ENCODE measurements at regions of chr4 and their contacts with region 1.

Region 1: GRCh38 chr4:1746265-1746691 is 25.0 kb downstream of the TACC3 start:
- DNase-seq: no peak
- H3K4me3 ChIP-seq: no peak overlapping the region
- H3K27ac ChIP-seq: no peak overlapping the region
- H3K4me1 ChIP-seq: peaks cover 14% of the 10 kb centered on the region
- H3K27me3 ChIP-seq: no peaks in the 10 kb centered on the region
- CTCF ChIP-seq: peak in 2 of 3 experiments; percentile 48 to 60
- POLR2A ChIP-seq: no peak

Region 2: GRCh38 chr4:1809754-1810511 is 63.7 kb after region 1 on chr4:
- intact Hi-C with region 1: loop called (anchors 5 kb)
- DNase-seq: no peak
- H3K4me3 ChIP-seq: no peak overlapping the region
- H3K27ac ChIP-seq: no peak overlapping the region
- H3K4me1 ChIP-seq: peaks cover 7% of the 10 kb centered on the region
- H3K27me3 ChIP-seq: no peaks in the 10 kb centered on the region
- CTCF ChIP-seq: peak; percentile 55 to 84 (median 81)
- POLR2A ChIP-seq: no peak

Measured in vagina (tissue), 2 donors.